ENCODE measurements at regions of chr7 and their contacts with region 1.

Region 1: DNA sequence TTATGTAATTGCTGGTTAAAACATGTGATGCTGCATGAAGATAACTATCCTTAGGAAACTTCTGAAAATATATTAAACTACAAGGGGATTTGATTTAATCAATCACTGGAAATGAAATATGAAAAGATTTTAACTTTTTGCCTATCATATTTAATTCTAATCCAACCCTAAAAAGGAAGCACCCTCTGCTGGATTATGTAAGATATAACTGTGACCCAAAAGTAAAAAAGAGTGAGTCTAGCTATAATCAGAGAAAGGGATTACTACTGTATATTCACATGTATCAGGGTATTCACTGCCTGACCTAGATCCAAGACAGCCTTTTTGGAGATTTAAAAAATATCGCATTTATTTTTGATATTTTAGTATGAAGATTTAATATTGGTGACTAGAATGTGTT is 295.5 kb downstream of the MDFIC start:
- DNase-seq: no peak
- ATAC-seq: no peak
- H3K4me3 ChIP-seq: no peak overlapping the region
- H3K27ac ChIP-seq: no peak overlapping the region
- H3K4me1 ChIP-seq: peaks cover 0 to 7% (median 4%) of the 10 kb centered on the region in 9 donors
- H3K27me3 ChIP-seq: no peaks in the 10 kb centered on the region
- CTCF ChIP-seq: peak in 8 of 9 donors; percentile 16 to 63 (median 49)

Region 2: DNA sequence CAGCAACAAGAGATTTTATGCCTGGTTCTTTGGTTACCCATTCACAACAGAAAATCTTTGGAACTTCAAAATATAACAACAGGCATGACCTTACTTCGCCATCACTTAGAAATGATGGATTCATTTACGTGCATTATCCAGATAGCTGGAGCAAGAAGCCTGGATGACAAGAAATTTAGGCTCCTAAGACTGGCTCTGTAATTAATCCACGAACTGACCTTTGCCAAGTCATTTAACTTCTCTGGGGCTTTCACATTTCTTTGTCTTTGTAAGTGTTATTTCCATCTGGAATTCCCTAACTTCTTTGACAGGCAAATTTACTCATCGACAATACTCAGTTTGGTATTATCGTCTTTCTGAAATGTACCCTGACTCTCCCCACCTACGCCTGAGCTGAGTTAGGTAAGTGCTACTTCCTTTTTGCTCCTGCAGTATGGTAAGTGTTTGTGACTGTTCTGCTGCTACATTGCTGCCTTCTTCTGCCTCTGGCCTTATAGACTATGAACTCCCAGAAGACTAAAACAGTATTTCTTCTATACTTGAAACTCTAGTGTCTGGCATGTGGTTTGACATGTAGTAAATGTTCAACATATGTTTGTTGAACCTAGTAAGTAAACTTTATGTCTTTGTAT is 301.0 kb before region 1 on chr7:
- intact Hi-C with region 1: loop called in 2 of 10 experiments (anchors 10 kb)
- DNase-seq: no peak
- ATAC-seq: no peak
- H3K4me3 ChIP-seq: no peak overlapping the region
- H3K27ac ChIP-seq: peak overlapping the region in 1 of 10 donors; percentile 66
- H3K4me1 ChIP-seq: peaks cover 0 to 10% (median 0%) of the 10 kb centered on the region in 9 donors
- H3K27me3 ChIP-seq: no peaks in the 10 kb centered on the region
- CTCF ChIP-seq: no peak

Measured in heart right ventricle (tissue), 16 donors.